Activated CD4-positive, alpha-beta memory T cell treated with anti-CD3 and anti-CD28 coated beads for 36 hours (primary cell): ENCODE measurements at regions of chr20 and their contacts with region 1.

Region 1: DNA sequence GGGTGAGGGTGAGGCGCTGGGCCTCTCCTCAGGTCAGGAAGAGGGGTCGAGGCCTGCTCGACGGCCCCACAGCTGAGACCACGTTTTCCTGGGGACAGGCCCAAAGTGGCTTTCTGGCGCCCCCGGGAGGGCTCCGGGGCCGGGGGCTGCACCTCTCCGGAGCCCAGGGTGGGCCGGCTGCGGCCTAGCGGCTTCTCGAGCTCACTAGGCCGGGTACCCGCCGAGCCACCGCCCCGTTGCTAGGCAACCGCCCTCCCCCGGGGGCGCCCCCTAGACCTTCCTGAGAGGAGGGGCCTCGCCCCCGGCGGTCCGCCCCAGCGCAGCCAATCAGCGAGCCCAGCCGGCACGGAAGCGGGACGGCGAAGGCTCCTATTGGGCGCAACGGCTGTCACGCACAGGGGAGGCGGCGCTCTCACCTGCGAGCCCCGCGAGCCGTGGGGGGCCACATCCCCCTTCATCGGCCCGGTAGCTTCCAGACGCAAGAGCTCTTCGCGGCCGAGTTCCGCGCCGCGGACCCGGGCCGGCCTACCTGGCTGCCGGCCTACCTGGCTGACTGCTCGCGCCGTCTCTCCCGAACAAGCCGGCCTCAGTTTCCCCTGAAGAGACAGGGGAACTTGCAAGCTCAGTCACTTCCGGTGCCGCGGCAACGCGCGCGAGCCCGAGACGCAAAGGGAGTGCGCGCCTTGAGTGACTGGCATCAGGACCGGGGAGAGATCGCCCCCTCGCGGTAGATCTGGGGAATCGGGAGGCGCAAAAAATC is 831 bp upstream of the BCL2L1 start:
- DNase-seq: peak; percentile 99
- H3K4me3 Mint-ChIP-seq: peak overlapping the region; percentile 98
- H3K27ac Mint-ChIP-seq: peak overlapping the region; percentile 96
- H3K4me1 Mint-ChIP-seq: peaks cover 5% of the 10 kb centered on the region
- H3K27me3 Mint-ChIP-seq: no peaks in the 10 kb centered on the region

Region 2: DNA sequence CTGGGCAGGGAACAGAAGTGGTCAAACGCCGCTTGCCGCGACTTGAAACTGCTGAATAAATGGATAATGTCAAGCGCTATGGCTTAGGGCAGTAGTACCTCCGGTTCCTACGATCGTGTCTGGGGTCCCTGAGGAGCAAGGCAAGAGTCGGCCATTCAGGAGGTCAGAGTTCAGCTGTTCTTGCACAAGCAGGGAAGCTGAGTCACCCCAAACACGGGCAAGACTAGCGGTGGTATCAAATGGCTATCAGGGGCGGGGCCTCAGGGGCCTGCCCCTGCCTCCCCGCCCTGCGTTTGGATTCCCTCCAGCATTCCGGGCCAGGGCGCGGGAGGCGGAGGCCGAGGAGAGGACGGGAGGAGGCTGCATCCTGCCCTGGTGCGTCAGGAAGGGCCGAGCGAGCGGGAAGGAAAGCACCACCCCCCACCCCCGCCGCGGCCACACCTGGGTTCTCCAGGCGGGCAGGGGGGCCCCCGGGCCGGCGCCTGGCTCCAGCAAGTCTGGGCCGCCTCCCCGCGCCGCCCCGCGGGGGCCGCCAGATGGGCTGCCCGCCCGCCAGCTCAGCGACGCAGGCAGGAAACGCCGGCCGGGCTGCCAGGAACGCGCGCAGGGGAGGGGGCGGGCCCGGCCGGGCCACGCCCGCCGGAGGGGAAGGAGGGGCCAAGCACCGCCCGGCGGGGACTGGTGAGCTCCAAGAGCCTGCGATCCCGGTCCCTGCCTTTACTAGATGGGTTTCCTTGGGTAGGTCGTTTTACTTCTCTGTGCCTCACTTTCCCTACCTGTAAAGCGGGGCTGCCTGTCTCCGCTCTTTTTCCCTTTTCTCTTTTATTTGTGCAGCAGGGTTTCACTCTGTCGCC is 150.6 kb before region 1 on chr20:
- CTCF ChIA-PET with region 1: interaction called, 11 read pairs
- POLR2A ChIA-PET with region 1: interaction called, 4 read pairs
- intact Hi-C with region 1: loop called (anchors 2 kb)
- DNase-seq: peak; percentile 94
- H3K4me3 Mint-ChIP-seq: peak overlapping the region; percentile 88
- H3K27ac Mint-ChIP-seq: peak overlapping the region; percentile 85
- H3K4me1 Mint-ChIP-seq: peaks cover 25% of the 10 kb centered on the region
- H3K27me3 Mint-ChIP-seq: no peaks in the 10 kb centered on the region

Region 3: DNA sequence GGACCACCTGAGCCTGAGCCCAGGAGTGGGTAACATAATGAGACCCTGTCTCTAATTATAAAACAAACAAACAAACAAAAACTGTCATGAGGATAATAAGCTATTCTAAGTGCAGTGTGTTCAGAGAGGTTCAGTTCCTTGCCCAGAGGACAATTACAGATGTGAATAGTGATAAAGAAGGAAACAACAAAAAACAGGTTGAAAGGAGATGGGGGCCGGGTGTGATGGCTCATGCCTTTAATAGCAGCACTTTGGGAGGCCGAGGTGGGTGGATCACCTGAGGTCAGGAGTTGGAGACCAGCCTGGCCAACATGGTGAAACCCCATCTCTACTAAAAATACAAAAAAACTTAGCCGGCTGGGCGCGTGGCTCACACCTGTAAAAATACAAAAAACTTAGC is 104.7 kb before region 1 on chr20:
- CTCF ChIA-PET with region 1: no interaction called
- POLR2A ChIA-PET with region 1: no interaction called
- intact Hi-C with region 1: no loop called
- DNase-seq: no peak
- H3K4me3 Mint-ChIP-seq: no peak overlapping the region
- H3K27ac Mint-ChIP-seq: no peak overlapping the region
- H3K4me1 Mint-ChIP-seq: no peaks in the 10 kb centered on the region
- H3K27me3 Mint-ChIP-seq: no peaks in the 10 kb centered on the region

Region 4: DNA sequence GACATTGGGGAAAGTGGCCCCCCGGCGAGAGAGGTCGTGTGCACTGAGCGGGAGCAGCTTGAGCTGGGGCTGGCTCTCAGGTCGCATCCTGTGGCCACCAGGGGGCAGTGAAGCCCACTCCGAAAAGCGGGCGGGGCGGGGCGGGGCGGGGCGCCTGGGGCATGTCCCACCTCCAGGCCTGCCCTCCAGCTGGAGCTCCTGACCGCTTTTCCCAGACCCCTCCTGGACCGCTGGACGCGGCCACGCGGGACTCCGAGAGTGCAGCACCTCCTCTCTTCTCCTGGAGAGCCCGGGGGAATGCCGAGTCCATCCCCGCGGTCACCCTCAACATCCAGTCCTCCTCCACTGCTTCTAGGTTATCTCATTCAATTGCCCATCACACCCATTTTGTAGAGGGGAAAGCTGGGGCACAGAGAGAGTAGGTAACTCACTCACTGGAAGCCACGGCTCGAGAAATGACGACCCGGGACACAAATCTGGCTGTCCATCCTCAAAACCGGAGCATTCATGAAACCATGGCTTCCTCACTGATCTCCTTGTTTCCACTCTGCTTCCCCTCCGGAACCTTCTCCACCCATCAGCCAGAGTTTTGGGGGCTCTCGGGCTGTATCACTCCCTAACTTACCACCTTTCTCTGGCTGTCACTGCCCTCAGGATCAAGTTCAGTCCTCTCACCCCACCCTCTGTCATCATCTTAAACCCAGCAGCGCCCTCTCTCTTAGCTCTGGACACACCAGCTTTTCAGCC is 61.7 kb before region 1 on chr20:
- CTCF ChIA-PET with region 1: interaction called, 417 read pairs
- POLR2A ChIA-PET with region 1: interaction called, 48 read pairs
- intact Hi-C with region 1: loop called (anchors 1 kb)
- DNase-seq: peak; percentile 85
- H3K4me3 Mint-ChIP-seq: peak overlapping the region; percentile 60
- H3K27ac Mint-ChIP-seq: peak overlapping the region; percentile 70
- H3K4me1 Mint-ChIP-seq: peaks cover 47% of the 10 kb centered on the region
- H3K27me3 Mint-ChIP-seq: no peaks in the 10 kb centered on the region

Region 5: GRCh38 chr20:31684153-31685015 is 39.1 kb before region 1 on chr20:
- CTCF ChIA-PET with region 1: interaction called, 18 read pairs
- POLR2A ChIA-PET with region 1: interaction called, 4 read pairs
- intact Hi-C with region 1: no loop called
- DNase-seq: no peak
- H3K4me3 Mint-ChIP-seq: no peak overlapping the region
- H3K27ac Mint-ChIP-seq: peak overlapping the region; percentile 70
- H3K4me1 Mint-ChIP-seq: peaks cover 77% of the 10 kb centered on the region
- H3K27me3 Mint-ChIP-seq: no peaks in the 10 kb centered on the region

Region 6: DNA sequence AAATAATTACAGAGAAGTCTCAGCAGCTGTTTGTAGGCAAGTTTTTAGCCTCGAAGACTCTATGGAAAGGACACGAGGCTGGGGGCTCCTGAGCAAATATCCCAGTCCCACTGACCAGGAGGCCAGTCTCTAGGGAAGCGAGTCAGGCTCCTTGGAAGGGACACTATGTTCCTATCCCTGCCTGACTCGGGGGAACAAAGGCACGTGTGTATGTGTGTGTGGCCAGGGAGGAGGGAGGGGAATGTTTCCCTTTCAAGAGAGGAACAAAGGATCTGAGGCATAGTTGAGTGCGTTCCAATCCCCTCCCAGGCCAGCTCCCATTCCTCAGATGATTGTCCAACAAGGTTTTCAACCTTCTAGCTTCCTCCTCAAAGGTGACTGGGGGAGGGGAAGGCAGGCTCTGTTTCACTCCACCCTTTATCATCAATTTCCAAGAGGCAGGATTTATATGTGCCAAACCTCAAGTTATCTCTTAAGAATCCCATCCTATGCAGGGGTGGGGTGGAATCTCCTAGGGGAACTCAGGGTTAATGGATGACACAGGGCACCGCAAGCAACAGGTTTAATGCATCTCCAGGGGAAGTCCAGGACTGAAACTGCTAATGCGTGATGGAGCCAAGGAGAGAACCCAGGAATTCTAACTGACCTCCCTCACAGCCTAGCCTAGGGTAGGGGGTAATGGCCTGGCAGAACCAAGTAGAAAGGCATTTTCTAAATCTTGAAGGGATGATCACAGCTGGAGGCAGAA is 10.8 kb before region 1 on chr20:
- CTCF ChIA-PET with region 1: interaction called, 16 read pairs
- POLR2A ChIA-PET with region 1: interaction called, 3 read pairs
- intact Hi-C with region 1: no loop called
- DNase-seq: no peak
- H3K4me3 Mint-ChIP-seq: peak overlapping the region; percentile 24
- H3K27ac Mint-ChIP-seq: peak overlapping the region; percentile 88
- H3K4me1 Mint-ChIP-seq: peaks cover 93% of the 10 kb centered on the region
- H3K27me3 Mint-ChIP-seq: no peaks in the 10 kb centered on the region

Region 7: GRCh38 chr20:31760519-31761240 is 37.2 kb after region 1 on chr20:
- CTCF ChIA-PET with region 1: no interaction called
- POLR2A ChIA-PET with region 1: no interaction called
- intact Hi-C with region 1: no loop called
- DNase-seq: no peak
- H3K4me3 Mint-ChIP-seq: no peak overlapping the region
- H3K27ac Mint-ChIP-seq: no peak overlapping the region
- H3K4me1 Mint-ChIP-seq: peaks cover 2% of the 10 kb centered on the region
- H3K27me3 Mint-ChIP-seq: no peaks in the 10 kb centered on the region